Caco-2 (cell line): ENCODE measurements at regions of chr19 and their contacts with region 1.

Region 1: DNA sequence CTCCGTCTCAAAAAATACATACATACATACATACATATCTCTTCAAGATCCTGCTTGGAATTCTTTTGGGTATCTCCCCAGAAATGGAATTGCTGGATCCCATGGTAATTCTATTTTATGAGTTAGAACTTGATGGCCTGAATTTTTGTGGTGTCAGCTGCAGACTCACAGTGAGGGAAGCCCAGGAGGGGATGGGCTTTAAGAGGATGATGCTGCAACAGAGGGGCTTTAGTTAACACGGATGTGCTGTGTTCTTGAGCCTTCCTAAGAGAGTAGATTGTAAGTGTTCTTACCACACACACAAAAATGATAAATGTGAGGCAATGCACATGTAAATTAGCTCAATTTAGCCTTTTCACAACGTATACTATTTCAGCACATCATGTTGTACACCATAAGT is 31.8 kb downstream of the CACNG6 start:
- DNase-seq: no peak
- H3K4me3 ChIP-seq: no peak overlapping the region
- H3K4me3 Mint-ChIP-seq: no peak overlapping the region
- H3K27ac Mint-ChIP-seq: no peak overlapping the region
- H3K4me1 ChIP-seq: peaks cover 5% of the 10 kb centered on the region
- H3K4me1 Mint-ChIP-seq: no peaks in the 10 kb centered on the region
- H3K27me3 ChIP-seq: no peaks in the 10 kb centered on the region
- H3K27me3 Mint-ChIP-seq: no peaks in the 10 kb centered on the region
- CTCF ChIP-seq: no peak

Region 2: GRCh38 chr19:53195265-53195903 is 827.8 kb before region 1 on chr19:
- CTCF ChIA-PET with region 1: interaction called, 3 read pairs
- POLR2A ChIA-PET with region 1: no interaction called
- intact Hi-C with region 1: loop called (anchors 5 kb)
- DNase-seq: peak; percentile 68 to 69
- H3K4me3 ChIP-seq: no peak overlapping the region
- H3K4me3 Mint-ChIP-seq: no peak overlapping the region
- H3K27ac Mint-ChIP-seq: no peak overlapping the region
- H3K4me1 ChIP-seq: no peaks in the 10 kb centered on the region
- H3K4me1 Mint-ChIP-seq: no peaks in the 10 kb centered on the region
- H3K27me3 ChIP-seq: no peaks in the 10 kb centered on the region
- H3K27me3 Mint-ChIP-seq: no peaks in the 10 kb centered on the region
- CTCF ChIP-seq: peak; percentile 78 to 84

Region 3: GRCh38 chr19:53792721-53793433 is 230.3 kb before region 1 on chr19:
- CTCF ChIA-PET with region 1: interaction called, 9 read pairs
- POLR2A ChIA-PET with region 1: no interaction called
- intact Hi-C with region 1: loop called (anchors 5 kb)
- DNase-seq: peak; percentile 90
- H3K4me3 ChIP-seq: no peak overlapping the region
- H3K4me3 Mint-ChIP-seq: peak overlapping the region; percentile 59
- H3K27ac Mint-ChIP-seq: peak overlapping the region; percentile 86
- H3K4me1 ChIP-seq: peaks cover 27% of the 10 kb centered on the region
- H3K4me1 Mint-ChIP-seq: no peaks in the 10 kb centered on the region
- H3K27me3 ChIP-seq: no peaks in the 10 kb centered on the region
- H3K27me3 Mint-ChIP-seq: no peaks in the 10 kb centered on the region
- CTCF ChIP-seq: peak; percentile 90 to 97